ENCODE measurements at regions of chr20 and their contacts with region 1.

Region 1: GRCh38 chr20:1776681-1777475 is 118.3 kb upstream of the SIRPA start:
- DNase-seq: peak; percentile 84
- H3K4me3 ChIP-seq: peak overlapping the region; percentile 75 to 98
- H3K27ac ChIP-seq: peak overlapping the region; percentile 48 to 55; a peak in 2 of 4 replicates
- H3K4me1 ChIP-seq: peaks cover 6 to 7% of the 10 kb centered on the region in 2 experiments; a peak in 3 of 4 replicates
- H3K27me3 ChIP-seq: 0 out of 2 replicates have a peak, but pooled peaks cover 7% of the 10 kb centered on the region
- CTCF ChIP-seq: peak; percentile 73
- EP300 ChIP-seq: peak in 1 of 2 experiments; percentile 15; a peak in 1 of 4 replicates
- RAD21 ChIP-seq: peak; percentile 71

Region 2: DNA sequence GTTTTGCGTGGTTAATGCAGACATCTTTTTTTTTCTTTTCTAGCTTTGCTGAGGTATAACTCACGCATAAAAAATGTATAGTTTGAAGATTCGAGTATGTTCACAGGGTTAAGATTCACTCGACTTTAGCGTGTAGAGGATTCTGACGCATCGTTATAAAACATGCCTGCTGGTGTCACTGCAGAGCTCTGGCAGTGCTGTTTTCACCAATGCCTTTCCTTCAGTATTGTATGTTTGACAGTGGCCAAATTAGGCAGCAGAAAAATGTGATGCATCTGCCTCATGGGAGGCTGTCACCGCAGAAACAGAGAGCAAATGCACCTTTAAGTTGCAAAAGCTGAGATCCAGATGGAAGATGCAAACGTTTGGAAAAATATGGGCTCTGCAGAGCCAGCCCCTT is 267.6 kb before region 1 on chr20:
- CTCF ChIA-PET with region 1: interaction called, 12 read pairs
- POLR2A ChIA-PET with region 1: no interaction called
- DNase-seq: peak; percentile 8
- H3K4me3 ChIP-seq: no peak overlapping the region
- H3K27ac ChIP-seq: no peak overlapping the region
- H3K4me1 ChIP-seq: no peaks in the 10 kb centered on the region
- H3K27me3 ChIP-seq: peaks cover 10% of the 10 kb centered on the region; the same call in 1 of the 2 replicates
- CTCF ChIP-seq: peak; percentile 58
- EP300 ChIP-seq: no peak
- RAD21 ChIP-seq: peak; percentile 58

Region 3: DNA sequence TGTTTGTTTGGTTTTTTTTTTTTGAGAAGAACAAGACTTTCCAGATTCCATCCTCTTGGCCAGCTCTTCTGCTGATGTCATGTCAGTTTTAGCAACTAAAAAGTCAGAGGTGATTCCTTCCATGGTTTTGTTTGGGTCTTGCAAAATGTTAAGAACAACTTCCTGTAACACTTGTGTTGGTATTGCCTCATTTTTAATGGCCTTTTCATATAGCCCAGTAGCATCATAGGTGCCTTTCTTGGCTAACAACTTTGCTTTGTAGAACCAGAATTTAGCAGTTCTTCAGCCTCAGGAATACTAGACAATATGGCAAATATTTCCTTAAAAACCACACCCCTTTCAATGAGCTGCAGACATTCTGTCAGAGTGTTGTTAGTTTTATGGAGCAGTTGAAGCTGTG is 19.8 kb before region 1 on chr20:
- CTCF ChIA-PET with region 1: interaction called, 10 read pairs
- POLR2A ChIA-PET with region 1: no interaction called
- DNase-seq: no peak
- H3K4me3 ChIP-seq: no peak overlapping the region
- H3K27ac ChIP-seq: no peak overlapping the region
- H3K4me1 ChIP-seq: peaks cover 0 to 13% of the 10 kb centered on the region in 2 experiments; a peak in 1 of 4 replicates
- H3K27me3 ChIP-seq: no peaks in the 10 kb centered on the region; the same call in 1 of the 2 replicates
- CTCF ChIP-seq: no peak
- EP300 ChIP-seq: no peak
- RAD21 ChIP-seq: no peak

Region 4: GRCh38 chr20:1764136-1765033 is 12.5 kb before region 1 on chr20:
- CTCF ChIA-PET with region 1: interaction called, 66 read pairs
- POLR2A ChIA-PET with region 1: interaction called, 3 read pairs
- DNase-seq: peak; percentile 65
- H3K4me3 ChIP-seq: no peak overlapping the region; a peak in 1 of 4 replicates
- H3K27ac ChIP-seq: no peak overlapping the region
- H3K4me1 ChIP-seq: peaks cover 6 to 13% of the 10 kb centered on the region in 2 experiments; a peak in 3 of 4 replicates
- H3K27me3 ChIP-seq: no peaks in the 10 kb centered on the region
- CTCF ChIP-seq: peak; percentile 86
- EP300 ChIP-seq: no peak
- RAD21 ChIP-seq: peak; percentile 82

Region 5: GRCh38 chr20:1790386-1790785 is 13.5 kb after region 1 on chr20:
- CTCF ChIA-PET with region 1: interaction called, 14 read pairs
- POLR2A ChIA-PET with region 1: interaction called, 4 read pairs
- DNase-seq: no peak
- H3K4me3 ChIP-seq: no peak overlapping the region
- H3K27ac ChIP-seq: no peak overlapping the region
- H3K4me1 ChIP-seq: no peaks in the 10 kb centered on the region
- H3K27me3 ChIP-seq: peaks cover 22% of the 10 kb centered on the region; the same call in 1 of the 2 replicates
- CTCF ChIP-seq: no peak
- EP300 ChIP-seq: no peak
- RAD21 ChIP-seq: no peak

Region 6: GRCh38 chr20:1810926-1811620 is 34.2 kb after region 1 on chr20:
- CTCF ChIA-PET with region 1: interaction called, 11 read pairs
- POLR2A ChIA-PET with region 1: no interaction called
- DNase-seq: no peak
- H3K4me3 ChIP-seq: no peak overlapping the region
- H3K27ac ChIP-seq: peak overlapping the region in 1 of 2 experiments; percentile 86; a peak in 2 of 4 replicates
- H3K4me1 ChIP-seq: peaks cover 17 to 51% of the 10 kb centered on the region in 2 experiments; a peak in 3 of 4 replicates
- H3K27me3 ChIP-seq: no peaks in the 10 kb centered on the region
- CTCF ChIP-seq: no peak
- EP300 ChIP-seq: no peak
- RAD21 ChIP-seq: no peak

Region 7: GRCh38 chr20:2042400-2042799 is 265.5 kb after region 1 on chr20:
- CTCF ChIA-PET with region 1: no interaction called
- POLR2A ChIA-PET with region 1: no interaction called
- DNase-seq: no peak
- H3K4me3 ChIP-seq: no peak overlapping the region
- H3K27ac ChIP-seq: no peak overlapping the region
- H3K4me1 ChIP-seq: no peaks in the 10 kb centered on the region
- H3K27me3 ChIP-seq: 0 out of 2 replicates have a peak, but pooled peaks cover 7% of the 10 kb centered on the region
- CTCF ChIP-seq: no peak
- EP300 ChIP-seq: no peak
- RAD21 ChIP-seq: no peak